HEK293 (cell line): ENCODE measurements at regions of chr7 and their contacts with region 1.

Region 1: GRCh38 chr7:128425850-128426249 is 16.1 kb upstream of the IMPDH1 start:
- H3K4me3 ChIP-seq: no peak overlapping the region
- H3K27ac ChIP-seq: no peak overlapping the region
- H3K4me1 ChIP-seq: no peaks in the 10 kb centered on the region
- CTCF ChIP-seq: peak; percentile 33; the same call in 1 of the 2 replicates

Region 2: GRCh38 chr7:128343554-128344430 is 82.1 kb before region 1 on chr7 and contains the start of gene RBM28:
- CTCF ChIA-PET with region 1: interaction called, 141 read pairs
- POLR2A ChIA-PET with region 1: no interaction called
- H3K4me3 ChIP-seq: peak within 1 kb of the TSS; percentile 95
- H3K27ac ChIP-seq: peak within 1 kb of the TSS; percentile 42
- H3K4me1 ChIP-seq: no peaks in the 10 kb centered on the region
- CTCF ChIP-seq: peak; percentile 28; the same call in 1 of the 2 replicates

Region 3: GRCh38 chr7:128381161-128381821 is 44.6 kb before region 1 on chr7:
- CTCF ChIA-PET with region 1: interaction called, 66 read pairs
- POLR2A ChIA-PET with region 1: no interaction called
- H3K4me3 ChIP-seq: no peak overlapping the region
- H3K27ac ChIP-seq: no peak overlapping the region
- H3K4me1 ChIP-seq: no peaks in the 10 kb centered on the region
- CTCF ChIP-seq: peak; percentile 59

Region 4: GRCh38 chr7:128398016-128398840 is 27.6 kb before region 1 on chr7:
- CTCF ChIA-PET with region 1: interaction called, 160 read pairs
- POLR2A ChIA-PET with region 1: interaction called, 3 read pairs
- H3K4me3 ChIP-seq: no peak overlapping the region
- H3K27ac ChIP-seq: no peak overlapping the region
- H3K4me1 ChIP-seq: no peaks in the 10 kb centered on the region
- CTCF ChIP-seq: peak; percentile 73

Region 5: DNA sequence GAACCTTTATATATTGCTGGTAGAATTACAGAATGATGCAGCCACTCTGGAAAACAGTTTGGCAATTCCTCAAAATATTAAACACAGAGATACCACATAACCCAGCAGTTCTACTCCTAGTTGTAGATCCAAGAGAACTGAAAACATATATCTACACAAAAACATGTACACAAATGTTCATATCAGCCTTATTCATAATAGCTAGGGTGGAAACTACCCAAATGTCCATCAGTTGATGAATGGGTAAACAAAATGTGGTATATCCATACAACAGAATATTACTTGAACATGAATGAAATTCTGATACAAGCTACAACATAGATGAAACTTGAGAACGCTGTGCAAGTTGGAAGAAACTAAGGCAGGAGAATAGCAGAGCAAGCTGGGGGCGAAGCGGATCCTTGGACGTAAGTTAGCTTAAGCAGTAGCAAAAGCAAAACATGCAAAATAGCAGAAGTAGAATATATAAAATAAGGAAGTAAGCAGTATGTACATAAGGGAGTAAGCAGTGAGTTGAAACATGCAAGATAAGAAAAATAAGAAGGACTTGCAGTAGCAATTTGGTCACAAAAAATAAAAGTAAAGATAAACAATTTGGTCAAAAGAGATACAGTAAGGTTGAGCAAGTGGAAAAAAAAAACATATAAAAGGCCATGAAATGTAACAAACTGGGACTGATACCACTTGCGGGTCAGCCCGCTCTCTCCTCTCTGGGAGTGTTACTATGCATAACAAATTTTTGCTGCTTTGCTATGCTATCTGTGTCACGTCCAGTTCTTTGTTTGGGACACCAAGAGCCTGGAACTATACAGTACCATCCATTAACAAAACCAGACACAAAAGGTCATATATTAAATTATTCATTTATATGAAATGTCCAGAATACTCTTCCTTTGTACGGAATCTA is 11.8 kb after region 1 on chr7:
- CTCF ChIA-PET with region 1: interaction called, 27 read pairs
- POLR2A ChIA-PET with region 1: no interaction called
- H3K4me3 ChIP-seq: no peak overlapping the region
- H3K27ac ChIP-seq: no peak overlapping the region
- H3K4me1 ChIP-seq: no peaks in the 10 kb centered on the region
- CTCF ChIP-seq: no peak

Region 6: GRCh38 chr7:128455551-128456254 is 29.9 kb after region 1 on chr7 and contains the start of gene HILPDA:
- CTCF ChIA-PET with region 1: interaction called, 189 read pairs
- POLR2A ChIA-PET with region 1: interaction called, 7 read pairs
- H3K4me3 ChIP-seq: peak within 1 kb of the TSS; percentile 56
- H3K27ac ChIP-seq: peak within 1 kb of the TSS; percentile 81
- H3K4me1 ChIP-seq: peaks cover 14% of the 10 kb centered on the region
- CTCF ChIP-seq: no peak

Region 7: DNA sequence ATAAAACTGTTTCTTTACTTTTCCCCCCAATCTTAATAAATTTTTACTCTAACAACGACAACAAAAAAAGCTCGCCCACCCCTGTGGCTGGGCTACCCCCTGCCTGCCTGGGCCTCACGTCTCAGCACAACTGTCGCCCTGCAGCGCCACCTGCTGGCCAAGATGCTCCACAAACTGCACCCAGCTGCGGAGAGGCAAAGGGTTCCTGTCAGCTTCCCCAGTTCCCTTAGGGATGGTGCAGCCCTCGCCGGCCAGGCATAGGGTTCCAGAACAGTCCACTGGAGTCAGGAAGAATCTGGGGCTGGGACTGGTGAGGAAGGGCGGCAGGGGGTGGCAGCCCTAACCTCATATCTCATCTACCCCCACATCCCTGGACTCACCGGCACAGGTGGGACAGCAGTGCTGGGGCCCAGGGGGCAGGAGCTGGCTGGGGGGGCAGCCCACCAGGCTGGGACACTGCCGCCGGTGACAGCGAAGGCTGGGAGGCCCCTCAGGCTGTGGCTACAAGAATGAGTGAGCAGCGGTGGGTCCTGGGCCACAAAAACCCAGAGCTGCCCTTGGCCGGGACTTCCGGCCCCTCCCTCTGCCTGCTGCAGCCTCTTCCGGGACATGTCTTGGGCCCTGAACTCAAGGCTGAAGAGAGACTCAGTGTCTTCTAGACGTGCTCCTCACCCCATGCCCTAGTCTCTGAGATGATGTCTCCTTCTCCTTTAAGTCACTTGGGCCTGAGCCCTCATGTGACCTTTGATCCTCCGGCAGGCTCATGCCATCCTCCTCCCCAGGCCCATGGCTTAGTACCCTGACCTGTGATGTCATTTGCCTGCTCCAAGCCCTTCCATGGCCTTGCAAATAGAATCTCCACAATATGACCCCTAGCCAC is 458.0 kb after region 1 on chr7:
- CTCF ChIA-PET with region 1: interaction called, 85 read pairs
- POLR2A ChIA-PET with region 1: no interaction called
- H3K4me3 ChIP-seq: no peak overlapping the region
- H3K27ac ChIP-seq: no peak overlapping the region
- H3K4me1 ChIP-seq: no peaks in the 10 kb centered on the region
- CTCF ChIP-seq: peak; percentile 76